ENCODE measurements at regions of chr11 and their contacts with region 1.

Region 1: GRCh38 chr11:62208785-62209144 is 292 bp downstream of the SCGB2A1 start:
- DNase-seq: no peak
- H3K4me3 Mint-ChIP-seq: no peak overlapping the region
- H3K27ac Mint-ChIP-seq: no peak overlapping the region
- H3K4me1 Mint-ChIP-seq: no peaks in the 10 kb centered on the region
- H3K27me3 Mint-ChIP-seq: peaks cover 2% of the 10 kb centered on the region

Region 2: DNA sequence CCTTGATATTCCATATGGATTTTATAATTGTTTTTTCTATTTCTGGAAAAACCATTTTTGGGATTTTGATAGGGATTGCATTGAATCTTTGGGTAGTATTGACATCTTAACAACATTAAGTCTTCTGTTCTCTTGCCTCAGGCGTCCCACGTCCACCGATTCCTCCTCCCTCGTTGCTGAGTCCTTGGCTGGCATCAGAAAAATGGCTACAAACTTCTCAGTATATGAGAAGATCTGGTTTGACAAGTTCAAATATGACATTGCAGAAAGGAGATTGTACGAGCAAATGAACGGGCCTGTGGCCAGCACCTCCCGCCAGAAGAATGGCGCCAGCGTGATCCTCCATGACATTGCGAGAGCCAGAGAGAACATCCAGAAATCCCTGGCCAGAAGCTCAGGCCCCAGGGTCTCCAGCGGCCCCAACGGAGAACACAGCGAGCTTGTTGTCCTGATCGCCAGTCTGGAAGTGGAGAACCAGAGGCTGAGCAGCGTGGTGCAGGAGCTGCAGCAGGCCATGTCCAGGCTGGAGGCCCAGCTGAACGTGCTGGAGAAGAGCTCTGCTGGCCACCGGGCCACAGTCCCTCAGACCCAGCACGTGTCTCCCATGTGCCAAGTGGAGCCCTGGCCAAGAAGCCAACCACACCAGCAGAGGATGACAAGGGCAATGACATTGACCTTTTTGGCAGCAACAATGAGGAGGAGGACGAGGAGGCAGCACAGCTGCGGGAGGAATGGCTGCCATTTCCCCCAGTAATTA is 39.5 kb before region 1 on chr11:
- CTCF ChIA-PET with region 1: interaction called, 4 read pairs
- intact Hi-C with region 1: loop called (anchors 1 kb)
- DNase-seq: no peak
- H3K4me3 Mint-ChIP-seq: no peak overlapping the region
- H3K27ac Mint-ChIP-seq: no peak overlapping the region
- H3K4me1 Mint-ChIP-seq: peaks cover 4% of the 10 kb centered on the region
- H3K27me3 Mint-ChIP-seq: peaks cover 19% of the 10 kb centered on the region

Region 3: DNA sequence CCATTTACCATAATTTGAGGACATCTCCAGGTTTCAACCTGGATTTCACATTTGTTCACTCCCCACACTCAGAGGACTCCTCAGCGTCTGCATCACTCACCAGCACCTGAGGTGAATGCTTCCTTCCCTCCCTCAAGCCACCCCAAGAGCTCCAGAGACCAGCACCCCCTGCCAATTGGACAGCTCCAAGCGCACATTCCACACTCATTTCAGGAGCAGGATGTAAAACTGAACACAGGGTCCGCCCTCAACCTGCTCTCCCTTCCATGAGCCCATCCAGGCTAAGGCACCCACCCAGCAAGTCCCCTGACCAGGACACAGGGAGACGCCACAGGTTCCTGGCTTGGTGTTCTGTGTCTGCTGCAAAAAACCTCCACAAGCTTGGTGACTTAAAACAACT is 14.8 kb before region 1 on chr11:
- CTCF ChIA-PET with region 1: no interaction called
- intact Hi-C with region 1: no loop called
- DNase-seq: peak; percentile 27
- H3K4me3 Mint-ChIP-seq: no peak overlapping the region
- H3K27ac Mint-ChIP-seq: no peak overlapping the region
- H3K4me1 Mint-ChIP-seq: no peaks in the 10 kb centered on the region
- H3K27me3 Mint-ChIP-seq: peaks cover 35% of the 10 kb centered on the region

Region 4: GRCh38 chr11:62309991-62310390 is 101.2 kb after region 1 on chr11:
- CTCF ChIA-PET with region 1: interaction called, 10 read pairs
- intact Hi-C with region 1: no loop called
- DNase-seq: no peak
- H3K4me3 Mint-ChIP-seq: no peak overlapping the region
- H3K27ac Mint-ChIP-seq: no peak overlapping the region
- H3K4me1 Mint-ChIP-seq: peaks cover 13% of the 10 kb centered on the region
- H3K27me3 Mint-ChIP-seq: peaks cover 18% of the 10 kb centered on the region